ENCODE measurements at regions of chr2 and their contacts with region 1.

Region 1: GRCh38 chr2:69026026-69026425 is 13.0 kb downstream of the ANTXR1 start:
- DNase-seq: peak; percentile 76
- H3K4me3 ChIP-seq: no peak overlapping the region
- H3K27ac ChIP-seq: no peak overlapping the region
- H3K4me1 ChIP-seq: peaks cover 3% of the 10 kb centered on the region
- H3K27me3 ChIP-seq: peaks cover 0 to 4% of the 10 kb centered on the region in 2 experiments
- CTCF ChIP-seq: peak; percentile 51 to 57
- POLR2A ChIP-seq: no peak

Region 2: DNA sequence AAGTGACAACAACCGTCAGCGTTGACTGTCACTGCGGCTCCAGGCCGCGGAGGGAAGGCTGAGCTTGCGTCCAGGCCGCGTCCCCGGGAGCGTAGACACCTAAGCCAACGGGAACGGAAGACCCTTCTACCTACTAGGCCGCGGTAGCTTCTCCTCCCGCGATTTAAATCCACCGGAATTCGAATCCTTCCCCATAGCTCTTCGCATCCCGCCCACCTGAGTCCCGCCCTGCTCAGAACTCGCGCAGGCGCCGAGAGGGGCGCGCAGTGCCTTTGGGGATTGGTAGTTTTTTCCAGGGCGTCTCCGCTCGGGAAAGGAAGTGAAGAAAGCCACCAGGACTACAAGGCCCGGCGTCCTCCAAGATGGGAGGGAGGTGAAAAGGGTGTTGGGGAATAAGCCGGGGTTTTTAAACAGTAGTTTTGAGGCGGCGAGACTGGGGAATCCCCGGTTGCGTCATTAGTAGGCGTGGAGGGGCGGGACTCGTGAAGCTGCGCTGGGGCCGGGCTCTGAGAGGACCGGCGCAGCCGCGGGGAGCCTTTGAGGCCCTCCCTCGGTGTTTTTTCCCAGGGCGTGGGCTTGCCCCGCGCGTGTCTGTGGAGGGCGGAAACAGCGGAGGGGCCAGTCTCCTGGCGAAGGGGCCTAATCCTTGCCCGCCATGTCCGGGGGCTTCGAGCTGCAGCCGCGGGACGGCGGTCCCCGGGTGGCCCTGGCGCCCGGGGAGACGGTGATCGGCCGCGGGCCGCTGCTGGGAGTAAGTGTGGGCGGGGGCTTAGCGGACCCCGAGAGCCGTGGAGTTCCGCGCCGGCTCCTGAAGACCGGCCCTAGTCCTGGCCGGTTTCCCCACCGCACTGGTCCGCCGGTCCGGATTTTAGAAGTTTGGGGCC is 558.7 kb before region 1 on chr2 and contains the starts of genes APLF and FBXO48:
- CTCF ChIA-PET with region 1: no interaction called
- POLR2A ChIA-PET with region 1: no interaction called
- dilution Hi-C with region 1: no loop called
- intact Hi-C with region 1: no loop called
- DNase-seq: peak; percentile 99
- H3K4me3 ChIP-seq: peak within 1 kb of the TSS; percentile 80 to 94 (median 85)
- H3K27ac ChIP-seq: peak within 1 kb of the TSS; percentile 74
- H3K4me1 ChIP-seq: peaks cover 7% of the 10 kb centered on the region
- H3K27me3 ChIP-seq: no peaks in the 10 kb centered on the region
- CTCF ChIP-seq: no peak
- POLR2A ChIP-seq: peak; percentile 68
- total RNA-seq, gene APLF: 2.3 and 2.4 TPM in 2 replicates
- total RNA-seq, gene FBXO48: 0.73 and 0.83 TPM in 2 replicates

Region 3: DNA sequence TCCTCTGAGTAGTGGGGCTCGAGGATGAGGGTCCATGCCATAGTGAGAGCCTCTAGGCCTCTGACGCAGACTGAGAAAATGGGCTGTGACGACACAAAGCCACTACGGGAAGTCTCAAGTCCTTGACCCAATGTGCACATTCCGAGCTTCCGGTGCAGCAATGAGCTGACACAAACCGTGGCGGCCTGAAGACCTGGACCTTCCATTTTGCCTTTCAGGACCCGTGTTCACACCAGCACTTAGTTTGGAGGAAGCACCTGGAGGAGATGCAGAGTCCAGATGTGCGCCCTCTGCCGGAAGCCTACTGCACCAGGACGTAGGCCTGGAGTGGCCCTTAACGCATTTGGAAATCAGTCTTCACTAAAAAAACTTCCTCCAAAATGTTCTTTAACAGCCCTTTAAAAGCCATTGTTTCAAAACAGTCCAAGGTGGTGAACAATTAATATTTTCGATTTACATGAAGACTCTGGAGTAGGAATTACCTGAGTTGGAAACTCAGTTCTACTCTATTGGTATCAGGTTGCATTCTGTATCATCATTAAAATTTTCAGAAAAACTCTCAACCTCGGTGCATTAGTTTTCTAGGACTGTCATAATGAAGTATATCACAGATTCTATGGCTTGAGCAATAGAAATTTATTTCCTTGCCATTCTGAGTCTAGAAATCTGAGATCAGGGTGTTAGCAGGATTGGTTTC is 188.7 kb before region 1 on chr2:
- CTCF ChIA-PET with region 1: no interaction called
- POLR2A ChIA-PET with region 1: no interaction called
- dilution Hi-C with region 1: no loop called
- intact Hi-C with region 1: no loop called
- DNase-seq: peak; percentile 73
- H3K4me3 ChIP-seq: no peak overlapping the region
- H3K27ac ChIP-seq: no peak overlapping the region
- H3K4me1 ChIP-seq: peaks cover 10% of the 10 kb centered on the region
- H3K27me3 ChIP-seq: no peaks in the 10 kb centered on the region
- CTCF ChIP-seq: peak; percentile 60 to 69
- POLR2A ChIP-seq: no peak

Region 4: GRCh38 chr2:69177785-69178636 is 152.0 kb after region 1 on chr2:
- CTCF ChIA-PET with region 1: interaction called, 4 read pairs
- POLR2A ChIA-PET with region 1: no interaction called
- dilution Hi-C with region 1: no loop called
- intact Hi-C with region 1: loop called (anchors 5 kb)
- DNase-seq: peak; percentile 74
- H3K4me3 ChIP-seq: peak overlapping the region in 1 of 3 experiments; percentile 0
- H3K27ac ChIP-seq: peak overlapping the region; percentile 91
- H3K4me1 ChIP-seq: peaks cover 14% of the 10 kb centered on the region
- H3K27me3 ChIP-seq: no peaks in the 10 kb centered on the region
- CTCF ChIP-seq: no peak
- POLR2A ChIP-seq: no peak

Region 5: DNA sequence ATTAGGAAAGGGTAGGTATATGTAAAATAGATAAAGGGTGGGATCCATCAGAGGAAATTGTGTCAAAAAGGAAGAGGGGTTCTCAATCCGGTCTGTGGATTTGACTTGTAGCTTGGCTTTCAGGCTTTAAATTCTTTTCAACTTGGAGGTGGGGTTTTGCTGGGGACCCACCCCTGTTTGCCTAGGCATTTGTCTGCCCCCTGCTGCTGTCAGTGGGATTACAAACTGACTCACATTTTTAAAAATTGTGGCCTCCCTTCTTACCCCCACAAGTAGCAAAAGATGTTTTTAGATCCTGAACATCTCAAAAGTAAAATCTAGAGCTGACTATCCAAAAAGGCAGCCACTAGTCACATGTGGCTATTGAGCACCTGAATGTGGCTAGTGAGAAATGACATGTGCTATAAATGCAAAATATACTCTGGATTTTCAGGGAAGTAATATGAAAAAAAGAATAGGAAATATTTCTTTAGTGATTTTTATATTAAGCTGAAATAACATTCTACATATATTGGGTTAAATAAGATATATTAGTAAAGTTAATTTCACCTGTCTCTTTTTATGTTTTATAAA is 182.1 kb after region 1 on chr2:
- CTCF ChIA-PET with region 1: interaction called, 3 read pairs
- POLR2A ChIA-PET with region 1: no interaction called
- dilution Hi-C with region 1: no loop called
- intact Hi-C with region 1: loop called (anchors 1 kb)
- DNase-seq: peak; percentile 12
- H3K4me3 ChIP-seq: no peak overlapping the region
- H3K27ac ChIP-seq: no peak overlapping the region
- H3K4me1 ChIP-seq: no peaks in the 10 kb centered on the region
- H3K27me3 ChIP-seq: no peaks in the 10 kb centered on the region
- CTCF ChIP-seq: peak; percentile 5 to 18
- POLR2A ChIP-seq: no peak

Region 6: GRCh38 chr2:69298261-69298660 is 272.2 kb after region 1 on chr2:
- CTCF ChIA-PET with region 1: interaction called, 10 read pairs
- POLR2A ChIA-PET with region 1: no interaction called
- dilution Hi-C with region 1: no loop called
- intact Hi-C with region 1: no loop called
- DNase-seq: peak; percentile 58
- H3K4me3 ChIP-seq: no peak overlapping the region
- H3K27ac ChIP-seq: peak overlapping the region; percentile 61
- H3K4me1 ChIP-seq: peaks cover 30% of the 10 kb centered on the region
- H3K27me3 ChIP-seq: no peaks in the 10 kb centered on the region
- CTCF ChIP-seq: no peak
- POLR2A ChIP-seq: no peak